Dorsolateral prefrontal cortex (tissue), 120 donors: ENCODE measurements at regions of chr10 and their contacts with region 1.

Region 1: DNA sequence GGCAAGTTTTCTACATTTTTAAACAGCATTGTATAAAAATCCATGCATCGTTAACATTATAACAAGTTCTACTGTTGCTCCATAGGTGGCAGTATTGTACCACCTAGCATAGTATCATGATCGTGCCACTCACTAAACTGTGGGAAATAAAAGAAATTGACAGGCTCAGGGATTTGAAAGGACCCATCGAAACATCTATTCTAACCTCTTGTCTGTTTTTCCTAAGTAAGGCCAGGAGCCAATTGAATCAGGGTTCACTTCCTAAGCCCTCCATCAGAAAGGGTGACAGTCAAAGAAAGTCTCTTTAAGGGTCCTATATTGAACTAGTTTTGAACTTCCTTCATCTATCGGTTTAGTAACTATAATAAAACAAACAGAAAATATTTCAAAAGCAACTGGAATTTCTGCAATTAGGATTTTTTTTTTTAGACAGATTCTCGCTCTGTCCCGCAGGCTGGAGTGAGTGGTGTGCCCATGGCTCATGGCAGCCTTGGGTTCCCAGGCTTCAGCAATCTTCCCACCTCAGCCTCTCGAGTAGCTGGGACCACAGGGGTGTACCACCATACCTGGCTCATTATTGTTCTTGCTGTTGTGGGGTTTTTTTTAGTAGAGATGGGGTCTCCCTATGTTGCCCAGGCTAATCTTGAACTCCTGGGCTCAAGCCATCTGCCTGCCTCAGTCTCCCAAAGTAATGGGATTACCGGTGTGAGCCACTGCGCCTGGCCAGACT is 9.4 kb downstream of the HACD1 start:
- DNase-seq: no peak
- H3K4me3 ChIP-seq: peak overlapping the region in 5 of 59 donors; percentile 8 to 41 (median 18)
- H3K27ac ChIP-seq: no peak overlapping the region
- H3K27me3 ChIP-seq: no peaks in the 10 kb centered on the region
- CTCF ChIP-seq: peak; percentile 66 to 97 (median 88)

Region 2: GRCh38 chr10:17586821-17587234 is 20.9 kb before region 1 on chr10:
- intact Hi-C with region 1: no loop called
- DNase-seq: no peak
- H3K4me3 ChIP-seq: no peak overlapping the region
- H3K27ac ChIP-seq: no peak overlapping the region
- H3K27me3 ChIP-seq: no peaks in the 10 kb centered on the region
- CTCF ChIP-seq: no peak

Region 3: DNA sequence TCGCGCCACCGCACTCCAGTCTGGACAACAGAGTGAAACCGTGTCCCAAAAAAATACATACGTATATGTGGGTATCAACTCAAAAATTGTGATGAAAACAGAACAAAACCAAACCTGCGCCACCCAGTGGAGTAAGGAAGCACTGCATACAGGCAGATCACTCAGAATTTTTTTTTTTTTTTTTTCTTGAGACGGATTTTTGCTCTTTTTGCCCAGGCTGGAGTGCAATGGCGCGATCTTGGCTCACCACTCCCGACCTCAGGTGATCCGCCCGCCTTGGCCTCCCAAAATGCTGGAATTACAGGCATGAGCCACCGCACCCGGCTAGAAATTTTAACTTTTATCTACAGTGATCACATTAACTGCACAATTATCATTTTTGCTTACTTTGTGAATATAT is 135.2 kb after region 1 on chr10:
- intact Hi-C with region 1: loop called in 1 of 2 experiments (anchors 2 kb)
- DNase-seq: peak in 8 of 10 donors; percentile 36 to 54 (median 46)
- H3K4me3 ChIP-seq: peak overlapping the region in 21 of 59 donors; percentile 2 to 47 (median 21)
- H3K27ac ChIP-seq: no peak overlapping the region
- H3K27me3 ChIP-seq: no peaks in the 10 kb centered on the region
- CTCF ChIP-seq: peak; percentile 72 to 98 (median 87)

Region 4: GRCh38 chr10:17872191-17873091 is 264.7 kb after region 1 on chr10:
- intact Hi-C with region 1: loop called in 1 of 2 experiments (anchors 10 kb)
- DNase-seq: peak in 1 of 10 donors; percentile 34
- H3K4me3 ChIP-seq: no peak overlapping the region
- H3K27ac ChIP-seq: no peak overlapping the region
- H3K27me3 ChIP-seq: no peaks in the 10 kb centered on the region
- CTCF ChIP-seq: peak in 26 of 56 donors; percentile 13 to 56 (median 24)

Region 5: DNA sequence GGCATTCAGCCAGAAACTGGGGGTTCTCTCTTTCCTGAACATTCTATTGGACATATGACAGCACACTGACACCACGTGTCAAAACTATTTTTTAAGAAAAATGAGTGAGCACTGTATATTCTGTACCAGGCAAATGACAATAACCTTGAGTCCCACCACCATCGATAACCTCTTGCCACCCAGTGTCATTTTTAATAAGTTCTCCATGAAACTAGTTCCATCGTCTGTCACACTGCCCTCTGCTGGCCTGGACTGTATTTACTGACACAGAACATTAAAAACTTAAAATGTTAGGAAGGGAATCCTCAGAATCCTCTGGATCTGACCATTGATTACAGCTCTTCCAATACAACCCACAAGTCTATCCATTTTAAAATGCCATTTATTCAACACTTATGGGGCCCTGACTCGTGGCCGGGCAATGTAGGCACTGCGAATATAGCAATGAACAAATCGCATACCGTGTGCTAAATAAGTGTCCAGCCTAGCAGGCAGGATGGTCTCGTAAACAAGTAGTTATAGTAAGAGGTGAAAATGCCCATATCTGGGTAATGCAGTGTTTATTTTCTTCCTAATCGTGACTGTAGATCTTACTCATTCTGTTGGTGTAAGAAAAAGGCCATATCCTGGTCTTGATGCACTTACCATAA is 496.6 kb after region 1 on chr10:
- intact Hi-C with region 1: loop called in 1 of 2 experiments (anchors 5 kb)
- DNase-seq: peak in 4 of 10 donors; percentile 32 to 65 (median 56)
- H3K4me3 ChIP-seq: peak overlapping the region in 6 of 59 donors; percentile 1 to 42 (median 3)
- H3K27ac ChIP-seq: no peak overlapping the region
- H3K27me3 ChIP-seq: peaks cover 0 to 3% (median 0%) of the 10 kb centered on the region in 45 donors
- CTCF ChIP-seq: peak; percentile 47 to 78 (median 67)

Region 6: GRCh38 chr10:18214691-18215563 is 607.2 kb after region 1 on chr10:
- intact Hi-C with region 1: loop called (anchors 10 kb)
- DNase-seq: peak in 6 of 10 donors; percentile 23 to 75 (median 50)
- H3K4me3 ChIP-seq: peak overlapping the region in 1 of 59 donors; percentile 11
- H3K27ac ChIP-seq: peak overlapping the region in 3 of 59 donors; percentile 5 to 32 (median 26)
- H3K27me3 ChIP-seq: peaks cover 0 to under 1% (median 0%) of the 10 kb centered on the region in 45 donors
- CTCF ChIP-seq: peak in 55 of 56 donors; percentile 48 to 89 (median 76)